PC-9 (cell line): ENCODE measurements at regions of chr11 and their contacts with region 1.

Region 1: DNA sequence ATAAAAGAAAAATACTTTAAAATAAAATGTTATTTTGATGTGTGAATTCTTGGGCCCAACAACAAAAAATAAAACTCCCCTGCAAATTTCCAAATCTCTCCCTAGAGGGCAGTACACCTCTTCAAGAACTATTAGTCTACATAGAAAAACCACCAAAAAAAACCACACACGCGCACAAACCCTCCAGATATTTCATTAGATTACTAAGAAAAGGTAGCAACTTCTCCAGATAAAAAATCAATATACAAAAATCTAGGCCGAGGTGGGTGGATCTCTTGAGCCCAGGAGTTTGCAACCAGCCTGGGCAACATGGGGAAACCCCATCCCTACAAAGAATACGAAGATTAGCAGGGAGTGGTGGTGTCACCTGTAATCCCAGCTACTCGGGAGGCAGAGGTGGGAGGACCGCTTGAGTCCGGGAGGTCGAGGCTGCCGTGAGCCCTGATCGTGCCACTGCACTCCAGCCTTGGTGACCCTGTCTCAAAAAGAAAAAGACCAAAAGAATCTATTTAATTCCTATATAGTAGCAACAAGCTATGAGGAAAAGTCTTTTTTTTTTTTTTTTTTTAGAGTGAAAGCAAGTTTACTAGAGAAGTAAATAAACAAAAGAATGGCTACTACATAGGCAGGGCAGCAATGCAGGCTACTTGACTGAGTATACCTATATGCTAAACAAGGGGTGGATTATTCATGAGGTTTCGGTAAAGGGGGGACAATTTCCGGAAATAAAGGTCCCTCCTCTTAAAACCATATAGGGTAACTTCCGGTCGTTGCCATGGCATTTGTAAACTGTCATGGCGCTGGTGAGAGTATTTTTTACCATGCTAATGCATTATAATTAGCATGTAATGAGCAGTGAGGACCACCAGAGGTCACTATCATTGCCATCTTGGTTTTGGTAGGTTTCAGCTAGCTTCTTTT is 13.1 kb downstream of the B3GNT6 start:
- DNase-seq: peak; percentile 81 to 94
- H3K4me3 ChIP-seq: peak overlapping the region; percentile 68
- H3K27ac ChIP-seq: peak overlapping the region; percentile 35; the same call in 1 of the 2 replicates
- H3K4me1 ChIP-seq: peaks cover 10% of the 10 kb centered on the region
- H3K27me3 ChIP-seq: no peaks in the 10 kb centered on the region
- CTCF ChIP-seq: peak; percentile 87

Region 2: DNA sequence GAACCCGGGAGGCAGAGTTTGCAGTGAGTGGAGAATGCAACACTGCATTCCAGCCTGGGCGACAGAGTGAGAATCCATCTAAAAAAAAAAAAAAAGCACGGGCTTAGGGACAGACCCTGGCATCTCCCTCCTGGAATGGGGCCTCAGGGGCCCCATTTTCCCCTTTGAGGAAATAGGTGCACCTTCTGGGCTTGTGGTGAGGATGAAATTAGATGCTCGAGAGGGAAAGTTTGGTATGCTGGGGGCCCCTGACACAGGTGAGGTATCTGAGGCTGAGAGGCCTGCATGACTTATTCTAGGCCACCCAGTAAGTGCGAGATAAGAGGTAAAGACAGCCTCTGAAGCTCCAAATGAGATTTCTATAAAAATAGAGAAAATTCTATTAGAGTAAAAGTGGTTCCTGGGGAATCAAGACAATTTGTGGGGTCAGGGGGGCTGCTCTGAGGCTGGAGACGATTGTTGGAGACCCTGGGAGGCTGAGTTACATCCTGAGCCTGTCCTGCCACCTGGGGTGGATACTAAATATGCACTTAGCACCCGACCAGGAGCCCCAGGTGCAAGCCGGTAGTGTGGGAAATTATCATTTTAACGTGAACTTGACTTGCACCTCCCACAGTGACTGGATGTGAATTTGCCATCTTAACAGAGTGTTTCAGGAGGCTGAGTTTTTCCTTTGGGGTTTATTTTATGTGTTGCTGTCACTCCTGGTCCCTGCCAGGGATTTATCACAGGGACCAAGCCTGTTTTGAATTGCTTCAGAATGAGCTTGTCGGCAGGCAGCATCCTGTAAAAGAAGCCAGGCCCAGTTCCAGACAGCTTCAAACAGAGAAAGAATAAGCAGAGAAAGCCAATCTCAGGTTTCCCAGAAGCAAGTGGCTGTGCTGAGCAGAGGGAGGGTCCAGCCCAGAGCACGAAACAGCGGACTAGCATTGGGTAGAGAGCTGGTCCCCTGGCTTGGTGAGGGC is 312.5 kb before region 1 on chr11:
- CTCF ChIA-PET with region 1: interaction called, 13 read pairs
- POLR2A ChIA-PET with region 1: no interaction called
- intact Hi-C with region 1: loop called (anchors 1 kb)
- DNase-seq: no peak
- H3K4me3 ChIP-seq: no peak overlapping the region
- H3K27ac ChIP-seq: no peak overlapping the region
- H3K4me1 ChIP-seq: no peaks in the 10 kb centered on the region
- H3K27me3 ChIP-seq: no peaks in the 10 kb centered on the region
- CTCF ChIP-seq: no peak

Region 3: GRCh38 chr11:77066229-77067042 is 19.2 kb after region 1 on chr11 and contains the start of gene CAPN5:
- CTCF ChIA-PET with region 1: interaction called, 13 read pairs
- POLR2A ChIA-PET with region 1: no interaction called
- intact Hi-C with region 1: no loop called
- DNase-seq: peak; percentile 74 to 97
- H3K4me3 ChIP-seq: peak within 1 kb of the TSS; percentile 71
- H3K27ac ChIP-seq: no peak within 1 kb of the TSS
- H3K4me1 ChIP-seq: peaks cover 10% of the 10 kb centered on the region
- H3K27me3 ChIP-seq: no peaks in the 10 kb centered on the region
- CTCF ChIP-seq: peak; percentile 50; the same call in 1 of the 2 replicates
- total RNA-seq, gene CAPN5: 9.9 and 10.5 TPM in 2 replicates

Region 4: DNA sequence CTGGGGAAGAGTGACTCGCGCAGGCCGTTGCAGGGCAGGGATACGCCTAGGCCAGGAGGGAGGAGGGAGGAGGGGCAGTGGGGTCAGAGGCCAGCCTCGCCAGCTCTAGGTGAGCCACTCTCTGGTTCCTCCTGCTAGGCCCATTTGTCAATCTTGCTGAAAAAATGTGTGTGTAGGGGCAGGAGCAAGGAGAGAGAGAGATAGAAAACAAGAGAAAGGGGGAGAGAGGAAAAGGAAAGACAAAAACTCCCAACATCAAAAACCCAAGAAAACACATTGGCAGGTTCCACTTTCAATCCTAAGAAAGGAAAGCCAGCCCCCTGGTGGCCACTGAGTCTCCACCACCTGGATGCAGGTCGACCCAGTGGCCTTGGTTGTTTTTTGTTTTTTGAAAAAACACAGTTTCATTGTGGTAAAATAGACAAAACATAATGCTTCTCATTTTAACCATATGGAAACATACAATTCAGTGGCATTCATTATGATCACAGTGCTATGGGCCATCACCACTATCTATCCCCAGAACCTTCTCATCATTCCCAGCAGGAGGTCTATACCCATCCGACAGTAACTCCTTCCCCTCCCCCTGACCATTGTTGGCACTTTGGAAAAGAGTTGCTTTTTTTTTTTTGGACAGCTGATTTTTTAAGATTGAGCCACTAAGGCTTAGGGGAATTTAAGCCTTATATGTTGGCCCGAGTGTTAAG is 66.3 kb after region 1 on chr11:
- CTCF ChIA-PET with region 1: interaction called, 7 read pairs
- POLR2A ChIA-PET with region 1: no interaction called
- intact Hi-C with region 1: loop called (anchors 1 kb)
- DNase-seq: peak in 1 of 2 experiments; percentile 52
- H3K4me3 ChIP-seq: no peak overlapping the region
- H3K27ac ChIP-seq: no peak overlapping the region
- H3K4me1 ChIP-seq: peaks cover 3% of the 10 kb centered on the region; the same call in 1 of the 2 replicates
- H3K27me3 ChIP-seq: no peaks in the 10 kb centered on the region
- CTCF ChIP-seq: peak; percentile 86

Region 5: DNA sequence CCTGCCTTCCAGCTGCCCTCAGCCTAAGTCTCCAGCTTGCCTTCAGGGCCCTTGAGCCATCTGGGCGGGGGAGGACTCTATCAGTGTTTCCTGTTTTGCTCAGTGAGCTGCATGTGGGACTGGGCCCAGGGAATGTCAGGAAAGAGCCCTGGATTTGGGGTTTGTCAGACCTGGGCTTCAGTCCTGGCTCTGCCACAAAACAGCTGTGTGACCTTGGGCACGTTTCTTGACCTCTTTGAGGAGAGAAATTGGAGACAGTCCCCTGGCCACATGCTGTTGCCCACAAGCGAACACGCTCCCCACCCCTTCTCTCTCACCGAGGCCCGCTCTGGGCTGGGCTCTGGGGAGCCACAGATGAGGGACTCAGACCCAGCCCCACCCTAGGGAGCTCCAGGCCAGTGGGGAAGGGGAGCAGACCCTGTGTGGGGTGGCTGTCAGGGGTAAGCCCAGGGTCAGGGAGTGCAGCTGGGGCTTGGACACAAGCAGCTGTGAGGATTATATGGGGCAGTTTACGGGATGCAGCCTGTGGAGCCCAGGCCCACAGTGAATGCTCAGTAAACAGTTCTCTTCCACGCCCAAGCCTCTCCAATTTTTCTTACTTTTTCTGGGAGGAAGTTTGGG is 93.1 kb after region 1 on chr11:
- CTCF ChIA-PET with region 1: no interaction called
- POLR2A ChIA-PET with region 1: no interaction called
- intact Hi-C with region 1: no loop called
- DNase-seq: no peak
- H3K4me3 ChIP-seq: no peak overlapping the region
- H3K27ac ChIP-seq: no peak overlapping the region
- H3K4me1 ChIP-seq: peaks cover 11% of the 10 kb centered on the region
- H3K27me3 ChIP-seq: peaks cover 6% of the 10 kb centered on the region; the same call in 1 of the 2 replicates
- CTCF ChIP-seq: no peak

Region 6: DNA sequence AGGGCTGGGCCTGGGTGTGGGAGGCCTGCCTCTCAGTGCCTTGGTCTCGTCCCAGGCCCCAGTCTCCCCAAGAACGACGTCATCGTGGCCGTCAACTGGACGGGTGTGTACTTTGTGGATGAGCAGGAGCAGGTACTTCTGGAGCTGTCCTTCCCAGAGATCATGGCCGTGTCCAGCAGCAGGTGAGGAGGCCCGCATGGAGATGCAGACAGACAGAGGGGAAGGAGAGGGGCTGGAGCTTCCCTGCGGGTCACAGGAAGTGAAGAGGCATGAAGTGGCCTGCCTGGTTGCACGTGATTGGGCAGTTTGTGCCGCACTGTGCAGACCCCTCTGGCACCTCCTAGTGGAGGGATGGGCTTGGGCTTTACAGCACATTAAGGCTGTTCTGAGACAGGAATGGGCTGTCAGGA is 151.2 kb after region 1 on chr11:
- CTCF ChIA-PET with region 1: interaction called, 10 read pairs
- POLR2A ChIA-PET with region 1: no interaction called
- intact Hi-C with region 1: no loop called
- DNase-seq: no peak
- H3K4me3 ChIP-seq: no peak overlapping the region
- H3K27ac ChIP-seq: no peak overlapping the region
- H3K4me1 ChIP-seq: no peaks in the 10 kb centered on the region
- H3K27me3 ChIP-seq: no peaks in the 10 kb centered on the region
- CTCF ChIP-seq: peak; percentile 60

Region 7: DNA sequence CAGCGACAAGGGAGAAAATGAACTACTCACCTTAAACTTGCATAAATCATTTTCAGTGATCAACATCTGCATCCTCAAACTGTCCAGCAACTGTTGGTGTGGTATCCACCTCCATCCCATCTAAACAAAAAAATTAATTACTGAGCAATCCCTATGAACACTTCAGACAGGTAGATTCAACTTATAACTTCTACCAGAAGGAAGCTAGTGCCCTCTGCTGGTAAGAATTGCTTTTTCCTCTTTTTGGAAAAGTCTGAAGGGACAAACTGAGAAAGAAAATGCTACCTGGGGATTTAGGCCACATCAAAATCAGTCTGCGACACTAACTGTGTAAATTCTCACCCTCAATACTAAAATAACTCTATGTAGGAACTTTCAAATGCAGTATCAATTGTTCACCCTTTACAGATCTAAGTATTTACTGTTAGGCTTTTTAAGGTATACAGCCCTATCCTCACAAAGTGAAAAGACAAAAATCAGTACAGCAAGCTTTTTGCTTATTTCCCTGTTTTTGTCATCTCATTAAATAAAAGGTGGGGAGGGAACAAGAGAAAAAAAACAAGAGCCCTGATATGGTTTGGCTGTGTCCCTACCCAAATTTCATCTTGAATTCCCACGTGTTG is 572.4 kb after region 1 on chr11:
- CTCF ChIA-PET with region 1: interaction called, 6 read pairs
- POLR2A ChIA-PET with region 1: no interaction called
- intact Hi-C with region 1: loop called (anchors 1 kb)
- DNase-seq: peak; percentile 29 to 56
- H3K4me3 ChIP-seq: no peak overlapping the region
- H3K27ac ChIP-seq: no peak overlapping the region
- H3K4me1 ChIP-seq: no peaks in the 10 kb centered on the region
- H3K27me3 ChIP-seq: no peaks in the 10 kb centered on the region
- CTCF ChIP-seq: peak; percentile 96